ENCODE measurements at regions of chr5 and their contacts with region 1.

Region 1: DNA sequence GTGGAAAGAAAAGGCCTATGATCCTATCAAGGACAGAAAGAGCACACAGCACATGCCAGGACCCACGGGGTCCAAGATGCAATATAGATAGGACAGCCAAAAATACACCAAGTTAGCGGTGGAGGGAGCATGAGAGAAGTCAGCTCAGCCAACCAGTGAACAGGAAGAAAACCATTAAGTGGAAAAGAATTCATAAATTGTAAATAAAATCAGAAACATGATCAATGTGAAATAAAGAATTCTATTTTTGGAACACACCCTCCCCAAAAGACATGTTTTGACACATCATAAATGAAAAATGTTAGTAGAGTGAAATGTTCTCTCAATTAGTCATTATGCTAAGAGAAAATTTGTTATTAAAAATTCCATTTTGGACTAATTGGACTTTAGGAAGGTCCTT is 35.6 kb downstream of the ATPSCKMT start:
- DNase-seq: peak; percentile 30
- ATAC-seq: peak; percentile 28; the same call in 1 of the 2 replicates
- H3K4me3 ChIP-seq: no peak overlapping the region
- H3K27ac ChIP-seq: no peak overlapping the region
- H3K4me1 ChIP-seq: peaks cover 9% of the 10 kb centered on the region
- H3K27me3 ChIP-seq: no peaks in the 10 kb centered on the region
- CTCF ChIP-seq: no peak

Region 2: GRCh38 chr5:10201223-10201868 is 12.7 kb before region 1 on chr5:
- CTCF ChIA-PET with region 1: no interaction called
- POLR2A ChIA-PET with region 1: no interaction called
- intact Hi-C with region 1: no loop called
- DNase-seq: no peak
- ATAC-seq: no peak
- H3K4me3 ChIP-seq: no peak overlapping the region
- H3K27ac ChIP-seq: no peak overlapping the region
- H3K4me1 ChIP-seq: no peaks in the 10 kb centered on the region
- H3K27me3 ChIP-seq: no peaks in the 10 kb centered on the region
- CTCF ChIP-seq: peak; percentile 69

Region 3: DNA sequence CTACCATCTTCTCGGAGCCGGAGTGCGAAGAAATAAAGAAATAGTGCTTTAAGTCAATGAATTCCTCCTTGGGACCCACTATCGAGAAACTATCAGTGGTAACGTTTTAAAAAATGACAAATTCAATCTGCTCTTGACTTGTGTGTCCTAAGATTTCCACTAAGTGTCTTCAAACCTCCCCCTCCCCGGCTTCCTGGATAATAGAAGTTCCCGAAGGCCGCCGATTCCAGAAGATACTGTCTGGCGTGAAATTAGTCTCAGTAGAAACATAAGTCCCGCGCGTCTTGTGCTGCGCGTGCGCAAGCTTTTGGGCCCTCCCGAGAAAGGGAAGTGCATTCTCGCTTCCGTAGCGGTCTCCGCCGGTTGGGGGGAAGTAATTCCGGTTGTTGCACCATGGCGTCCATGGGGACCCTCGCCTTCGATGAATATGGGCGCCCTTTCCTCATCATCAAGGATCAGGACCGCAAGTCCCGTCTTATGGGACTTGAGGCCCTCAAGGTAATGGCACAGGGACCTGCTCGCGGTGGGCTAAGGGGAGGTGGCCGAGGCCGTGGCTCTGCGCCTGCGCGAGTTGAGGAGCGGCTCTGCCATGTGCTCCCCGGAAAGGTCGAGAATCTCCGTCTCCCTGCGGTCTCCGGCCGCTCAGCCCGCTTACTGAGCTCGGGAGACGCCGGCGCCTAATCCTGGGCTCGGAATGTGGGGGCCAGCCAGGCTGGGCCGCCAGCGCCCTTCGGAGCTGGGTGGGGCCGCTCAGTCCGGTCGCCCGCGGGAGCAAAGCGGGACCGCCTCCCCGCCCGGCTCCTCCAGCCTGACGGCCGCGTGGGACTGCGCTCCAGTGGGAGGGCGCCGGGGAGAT is 36.1 kb after region 1 on chr5 and contains the start of gene CCT5:
- CTCF ChIA-PET with region 1: interaction called, 13 read pairs
- POLR2A ChIA-PET with region 1: interaction called, 26 read pairs
- intact Hi-C with region 1: no loop called
- DNase-seq: peak; percentile 99
- ATAC-seq: peak; percentile 64
- H3K4me3 ChIP-seq: peak within 1 kb of the TSS; percentile 91
- H3K27ac ChIP-seq: peak within 1 kb of the TSS; percentile 82
- H3K4me1 ChIP-seq: peaks cover 31% of the 10 kb centered on the region
- H3K27me3 ChIP-seq: no peaks in the 10 kb centered on the region
- CTCF ChIP-seq: no peak
- total RNA-seq, gene CCT5: 1,309 and 1,334 TPM in 2 replicates

Region 4: DNA sequence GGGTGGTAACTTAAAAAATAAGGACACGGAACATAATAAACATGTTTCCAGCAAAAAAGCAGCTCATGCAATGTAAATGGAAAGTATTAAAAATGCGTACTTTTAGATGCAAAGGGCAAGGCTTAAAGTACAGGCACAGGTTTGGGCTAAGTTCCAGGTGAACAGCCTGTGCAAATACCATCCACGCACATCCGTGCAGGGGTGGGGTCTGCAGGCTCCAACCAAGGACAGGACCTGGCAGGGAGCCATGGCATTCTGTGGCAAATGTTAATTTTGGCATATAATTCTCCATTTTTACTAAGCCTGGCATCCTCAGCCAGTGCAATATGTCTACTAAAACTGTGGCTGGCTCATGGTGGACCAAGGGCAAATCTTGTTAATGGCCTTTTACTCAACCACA is 912.8 kb after region 1 on chr5:
- CTCF ChIA-PET with region 1: no interaction called
- POLR2A ChIA-PET with region 1: no interaction called
- intact Hi-C with region 1: no loop called
- DNase-seq: no peak
- ATAC-seq: no peak
- H3K4me3 ChIP-seq: no peak overlapping the region
- H3K27ac ChIP-seq: no peak overlapping the region
- H3K4me1 ChIP-seq: no peaks in the 10 kb centered on the region
- H3K27me3 ChIP-seq: peaks cover 17% of the 10 kb centered on the region; the same call in 1 of the 2 replicates
- CTCF ChIP-seq: no peak